ENCODE measurements at regions of chr2 and their contacts with region 1.

Region 1: GRCh38 chr2:85959826-85960225 is 71.0 kb upstream of the ST3GAL5 start:
- DNase-seq: no peak
- H3K4me3 Mint-ChIP-seq: no peak overlapping the region
- H3K27ac Mint-ChIP-seq: no peak overlapping the region
- H3K4me1 Mint-ChIP-seq: peaks cover 14% of the 10 kb centered on the region
- H3K27me3 Mint-ChIP-seq: no peaks in the 10 kb centered on the region

Region 2: GRCh38 chr2:85949280-85949679 is 10.5 kb before region 1 on chr2:
- CTCF ChIA-PET with region 1: interaction called, 36 read pairs
- POLR2A ChIA-PET with region 1: no interaction called
- DNase-seq: no peak
- H3K4me3 Mint-ChIP-seq: no peak overlapping the region
- H3K27ac Mint-ChIP-seq: no peak overlapping the region
- H3K4me1 Mint-ChIP-seq: peaks cover 5% of the 10 kb centered on the region
- H3K27me3 Mint-ChIP-seq: peaks cover 8% of the 10 kb centered on the region